GM18951 (cell line): ENCODE measurements at regions of chr9 and their contacts with region 1.

Region 1: DNA sequence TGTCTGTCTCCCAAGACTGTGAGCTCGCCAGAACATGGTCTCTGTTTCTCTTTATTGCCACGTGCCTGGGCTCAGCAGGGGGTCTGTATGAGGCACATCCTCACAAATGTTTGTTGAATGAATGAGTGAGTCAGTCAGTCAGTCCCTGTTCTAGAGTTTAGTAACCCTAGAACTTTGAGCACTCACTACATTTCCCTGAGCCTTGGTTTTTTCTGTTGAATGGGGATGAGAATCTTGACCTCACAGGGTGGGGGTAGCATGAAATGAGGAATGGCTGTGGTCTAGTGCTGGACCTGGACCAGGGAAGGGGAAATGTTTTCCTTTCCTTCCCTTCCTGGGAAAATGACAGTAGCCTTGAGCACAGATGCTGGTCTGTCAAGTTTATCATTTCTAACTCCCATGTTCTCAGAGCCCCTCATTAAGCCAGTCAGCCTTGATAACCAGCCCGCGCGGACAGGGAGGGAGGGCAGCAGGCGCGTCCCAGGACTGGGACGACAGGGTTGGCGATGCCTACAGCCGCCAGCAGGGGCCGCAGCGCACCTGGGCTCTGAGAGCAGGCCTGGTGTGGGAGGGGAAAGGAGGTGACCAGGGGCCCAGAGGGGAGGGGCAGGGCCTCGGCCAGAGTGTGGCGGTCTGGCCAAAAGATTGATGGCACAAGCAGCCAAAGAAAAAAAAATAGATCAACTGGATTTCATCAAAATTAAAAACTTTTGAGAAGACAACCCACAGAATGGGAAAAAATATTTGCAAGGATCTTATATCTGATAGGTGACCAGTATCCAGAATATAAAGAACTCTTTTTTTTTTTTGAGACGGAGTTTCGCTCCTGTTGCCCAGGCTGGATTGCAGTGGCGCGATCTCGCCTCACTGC is 24.1 kb upstream of the WNK2 start:
- POLR2A ChIP-seq: no peak

Region 2: DNA sequence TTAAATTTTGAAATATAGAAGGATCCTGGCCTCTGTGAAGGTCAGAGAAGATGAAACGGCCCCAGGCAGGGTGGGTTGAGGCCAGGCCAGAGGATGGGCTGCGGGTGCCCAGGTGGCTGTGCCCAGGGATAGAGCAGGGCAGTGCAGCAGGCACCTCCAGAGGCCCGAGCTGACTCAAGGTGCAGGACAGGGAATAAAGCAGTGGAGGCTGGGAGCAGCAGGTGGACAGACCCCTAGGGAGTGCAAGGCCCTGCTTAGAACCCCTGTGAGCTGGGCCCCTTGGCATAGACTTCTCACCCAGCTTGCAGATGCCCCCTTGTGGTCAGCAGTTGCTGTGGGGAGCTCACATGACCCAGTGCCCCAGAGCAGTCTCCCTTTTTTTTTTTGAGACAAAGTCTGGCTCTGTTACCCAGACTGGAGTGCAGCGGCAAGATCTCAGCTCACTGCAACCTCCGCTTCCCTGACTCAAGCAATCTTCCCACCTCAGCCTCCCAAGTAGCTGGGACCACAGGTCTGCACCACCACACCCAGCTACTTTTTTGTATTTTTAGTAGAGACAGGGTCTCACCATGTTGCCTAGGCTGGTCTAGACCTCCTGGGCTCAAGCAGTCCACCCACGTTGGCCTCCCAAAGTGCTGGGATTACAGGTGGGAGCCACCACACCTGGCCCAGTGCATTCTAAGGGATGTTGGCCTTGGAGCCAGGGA is 142.9 kb after region 1 on chr9:
- in situ Hi-C with region 1: loop called (anchors 10 kb)
- POLR2A ChIP-seq: no peak

Region 3: DNA sequence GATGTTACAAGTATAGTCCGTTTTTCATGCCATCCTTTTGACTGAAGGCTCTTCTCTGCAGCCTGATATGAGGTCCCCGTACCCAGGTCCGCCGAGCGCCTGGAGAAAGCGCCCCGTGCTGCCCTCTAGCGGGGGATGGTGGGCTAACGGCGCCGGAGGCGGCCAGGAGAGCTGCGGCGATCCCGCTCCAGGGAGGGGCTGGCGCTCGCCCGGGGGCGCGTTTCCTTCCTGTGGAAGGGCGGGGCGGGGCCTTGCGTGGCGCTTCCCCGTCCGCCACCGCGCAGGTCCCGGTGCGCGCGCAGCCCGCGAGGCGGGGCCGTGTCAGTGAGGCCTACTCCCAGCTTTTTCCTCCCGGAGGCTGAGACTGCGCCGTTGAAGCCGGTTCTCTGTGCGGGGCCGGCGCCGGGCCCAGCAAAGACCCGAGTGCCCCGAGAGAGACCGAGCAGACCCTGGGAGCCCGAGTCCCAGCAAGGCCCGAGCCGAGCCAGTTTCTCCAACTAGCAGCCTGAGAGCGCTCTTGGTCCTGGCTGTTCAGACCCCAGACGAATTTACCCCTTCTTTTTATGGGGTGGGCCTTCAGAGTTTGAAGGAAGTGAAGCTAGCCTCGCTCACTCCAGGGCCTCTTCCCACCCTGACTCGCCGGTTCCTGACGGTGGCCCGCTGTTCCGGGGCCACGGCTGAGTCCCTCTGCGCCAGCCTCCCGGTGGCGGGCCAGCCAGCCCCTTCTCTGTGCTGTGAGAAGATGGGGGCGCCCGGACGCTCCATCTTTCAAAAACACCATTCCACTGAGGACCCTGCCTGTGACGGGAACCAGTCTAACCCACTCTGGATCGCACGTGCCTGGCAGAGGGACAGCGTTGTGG is 406.8 kb after region 1 on chr9:
- in situ Hi-C with region 1: loop called (anchors 25 kb)
- POLR2A ChIP-seq: peak; percentile 97